ENCODE measurements at regions of chr11 and their contacts with region 1.

Region 1: GRCh38 chr11:1694064-1694845 is 2.7 kb upstream of the KRTAP5-6 start:
- DNase-seq: peak; percentile 63 to 90 (median 82)
- ATAC-seq: peak; percentile 85
- H3K4me3 ChIP-seq: no peak overlapping the region
- H3K4me3 Mint-ChIP-seq: no peak overlapping the region
- H3K27ac ChIP-seq: no peak overlapping the region
- H3K27ac Mint-ChIP-seq: no peak overlapping the region
- H3K4me1 ChIP-seq: peaks cover 16% of the 10 kb centered on the region
- H3K4me1 Mint-ChIP-seq: peaks cover 3% of the 10 kb centered on the region
- H3K27me3 ChIP-seq: peaks cover 0 to 7% of the 10 kb centered on the region in 2 experiments
- H3K27me3 Mint-ChIP-seq: peaks cover 16% of the 10 kb centered on the region
- CTCF ChIP-seq: peak; percentile 64

Region 2: DNA sequence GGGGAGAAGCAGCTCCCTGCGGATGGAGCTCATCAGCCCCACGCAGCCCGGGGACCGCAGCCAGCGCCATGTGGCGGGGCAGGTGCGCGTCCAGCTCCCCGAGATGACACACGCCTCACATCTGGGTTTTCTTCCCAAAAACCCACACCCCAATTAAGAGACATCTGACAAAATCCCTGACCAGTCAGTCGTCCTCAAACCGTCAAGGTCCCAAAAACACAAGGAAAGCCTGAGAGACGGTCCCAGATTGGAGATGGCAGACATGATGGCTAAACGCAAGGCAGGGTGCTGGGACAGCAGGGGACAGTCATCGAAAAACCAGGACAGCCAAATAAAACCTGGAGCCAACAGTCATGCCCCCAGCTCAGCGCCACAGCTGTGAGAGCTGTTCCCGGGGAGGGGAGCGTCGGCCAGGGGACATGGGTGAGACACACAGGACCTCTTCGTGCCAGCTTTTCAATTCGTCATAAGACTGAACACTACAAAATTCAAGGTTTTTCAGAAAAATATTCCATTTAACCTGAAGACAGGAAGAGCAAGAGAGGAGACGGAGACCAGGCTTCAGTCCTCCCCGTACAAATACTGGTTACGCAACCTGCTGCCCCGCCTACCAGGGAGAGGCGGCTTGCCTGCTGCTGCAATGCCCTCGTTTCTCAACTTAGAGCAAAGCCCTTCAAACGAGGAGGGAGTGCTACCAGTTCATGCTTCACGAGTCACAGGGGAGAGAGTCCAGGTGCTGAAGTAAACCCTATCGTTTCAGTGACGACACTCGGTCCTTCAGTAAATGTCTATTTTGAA is 395.4 kb before region 1 on chr11:
- CTCF ChIA-PET with region 1: no interaction called
- POLR2A ChIA-PET with region 1: no interaction called
- intact Hi-C with region 1: no loop called
- DNase-seq: no peak
- ATAC-seq: no peak
- H3K4me3 ChIP-seq: no peak overlapping the region
- H3K4me3 Mint-ChIP-seq: no peak overlapping the region
- H3K27ac ChIP-seq: no peak overlapping the region
- H3K27ac Mint-ChIP-seq: no peak overlapping the region
- H3K4me1 ChIP-seq: no peaks in the 10 kb centered on the region
- H3K4me1 Mint-ChIP-seq: peaks cover 16% of the 10 kb centered on the region
- H3K27me3 ChIP-seq: no peaks in the 10 kb centered on the region
- H3K27me3 Mint-ChIP-seq: no peaks in the 10 kb centered on the region
- CTCF ChIP-seq: no peak

Region 3: GRCh38 chr11:1674173-1675131 is 19.8 kb before region 1 on chr11:
- CTCF ChIA-PET with region 1: interaction called, 39 read pairs
- POLR2A ChIA-PET with region 1: no interaction called
- intact Hi-C with region 1: no loop called
- DNase-seq: no peak
- ATAC-seq: no peak
- H3K4me3 ChIP-seq: no peak overlapping the region
- H3K4me3 Mint-ChIP-seq: no peak overlapping the region
- H3K27ac ChIP-seq: no peak overlapping the region
- H3K27ac Mint-ChIP-seq: no peak overlapping the region
- H3K4me1 ChIP-seq: peaks cover 1% of the 10 kb centered on the region
- H3K4me1 Mint-ChIP-seq: no peaks in the 10 kb centered on the region
- H3K27me3 ChIP-seq: peaks cover 0 to 12% of the 10 kb centered on the region in 2 experiments
- H3K27me3 Mint-ChIP-seq: peaks cover 24% of the 10 kb centered on the region
- CTCF ChIP-seq: no peak

Region 4: DNA sequence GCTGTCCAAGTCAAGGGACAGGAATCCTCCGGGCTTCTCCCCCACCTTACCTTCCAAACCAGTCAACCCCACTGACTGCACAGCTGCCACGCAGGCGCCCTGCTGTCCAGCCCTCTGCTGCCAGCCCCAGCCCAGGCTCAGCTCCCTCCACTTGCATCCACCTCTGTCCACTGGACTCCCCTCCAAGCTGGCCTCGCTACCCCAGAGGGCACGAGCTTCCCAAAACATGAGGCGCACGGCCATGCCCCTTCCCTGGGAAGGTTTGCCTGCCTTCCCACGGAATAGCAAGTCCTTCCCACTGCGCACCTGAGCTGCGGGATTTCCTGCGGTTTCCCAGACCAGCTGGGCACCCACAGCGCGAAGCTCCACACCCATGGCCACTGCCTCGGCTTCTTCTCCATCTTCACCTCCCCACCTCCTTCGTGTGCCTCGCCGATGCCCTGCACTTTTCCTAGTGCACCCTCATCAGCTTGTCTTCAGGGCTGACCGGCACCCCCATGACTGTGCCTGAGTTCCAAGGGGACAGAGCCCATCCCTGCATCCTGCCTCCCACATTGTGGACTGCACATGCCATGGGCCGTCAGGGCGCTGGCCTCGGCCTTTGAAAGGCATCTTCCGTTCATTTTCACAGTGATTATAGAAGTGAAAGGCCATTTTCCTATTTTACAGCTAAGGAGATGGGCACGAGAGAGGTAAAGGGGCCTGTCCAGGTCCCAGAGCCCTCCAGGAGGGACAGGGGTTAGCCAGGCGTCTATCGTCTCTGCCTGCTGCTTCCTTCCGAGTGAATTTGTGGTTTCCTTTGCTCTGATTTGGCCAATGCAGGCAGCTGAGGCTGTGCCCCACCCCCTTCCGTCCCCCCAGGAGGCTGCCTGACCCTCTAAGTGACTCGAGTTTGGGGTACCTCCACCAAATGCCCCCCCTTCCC is 39.7 kb after region 1 on chr11:
- CTCF ChIA-PET with region 1: interaction called, 12 read pairs
- POLR2A ChIA-PET with region 1: no interaction called
- intact Hi-C with region 1: no loop called
- DNase-seq: no peak
- ATAC-seq: no peak
- H3K4me3 ChIP-seq: no peak overlapping the region
- H3K4me3 Mint-ChIP-seq: no peak overlapping the region
- H3K27ac ChIP-seq: no peak overlapping the region
- H3K27ac Mint-ChIP-seq: no peak overlapping the region
- H3K4me1 ChIP-seq: peaks cover 25% of the 10 kb centered on the region
- H3K4me1 Mint-ChIP-seq: peaks cover 33% of the 10 kb centered on the region
- H3K27me3 ChIP-seq: peaks cover 0 to 10% of the 10 kb centered on the region in 2 experiments
- H3K27me3 Mint-ChIP-seq: peaks cover 14% of the 10 kb centered on the region
- CTCF ChIP-seq: no peak

Region 5: GRCh38 chr11:1807264-1807995 is 113.2 kb after region 1 on chr11:
- CTCF ChIA-PET with region 1: interaction called, 42 read pairs
- POLR2A ChIA-PET with region 1: no interaction called
- intact Hi-C with region 1: no loop called
- DNase-seq: peak in 1 of 9 experiments; percentile 28
- ATAC-seq: no peak
- H3K4me3 ChIP-seq: no peak overlapping the region
- H3K4me3 Mint-ChIP-seq: no peak overlapping the region
- H3K27ac ChIP-seq: no peak overlapping the region
- H3K27ac Mint-ChIP-seq: no peak overlapping the region
- H3K4me1 ChIP-seq: no peaks in the 10 kb centered on the region
- H3K4me1 Mint-ChIP-seq: no peaks in the 10 kb centered on the region
- H3K27me3 ChIP-seq: no peaks in the 10 kb centered on the region
- H3K27me3 Mint-ChIP-seq: peaks cover 7% of the 10 kb centered on the region
- CTCF ChIP-seq: no peak

Region 6: GRCh38 chr11:1837171-1838076 is 143.2 kb after region 1 on chr11:
- CTCF ChIA-PET with region 1: interaction called, 513 read pairs
- POLR2A ChIA-PET with region 1: interaction called, 7 read pairs
- intact Hi-C with region 1: loop called in 1 of 2 experiments (anchors 1 kb)
- DNase-seq: peak; percentile 73 to 94 (median 88)
- ATAC-seq: peak; percentile 98
- H3K4me3 ChIP-seq: no peak overlapping the region
- H3K4me3 Mint-ChIP-seq: no peak overlapping the region
- H3K27ac ChIP-seq: no peak overlapping the region
- H3K27ac Mint-ChIP-seq: no peak overlapping the region
- H3K4me1 ChIP-seq: peaks cover 25% of the 10 kb centered on the region
- H3K4me1 Mint-ChIP-seq: peaks cover 10% of the 10 kb centered on the region
- H3K27me3 ChIP-seq: peaks cover 0 to 6% of the 10 kb centered on the region in 2 experiments
- H3K27me3 Mint-ChIP-seq: no peaks in the 10 kb centered on the region
- CTCF ChIP-seq: peak; percentile 84

Region 7: DNA sequence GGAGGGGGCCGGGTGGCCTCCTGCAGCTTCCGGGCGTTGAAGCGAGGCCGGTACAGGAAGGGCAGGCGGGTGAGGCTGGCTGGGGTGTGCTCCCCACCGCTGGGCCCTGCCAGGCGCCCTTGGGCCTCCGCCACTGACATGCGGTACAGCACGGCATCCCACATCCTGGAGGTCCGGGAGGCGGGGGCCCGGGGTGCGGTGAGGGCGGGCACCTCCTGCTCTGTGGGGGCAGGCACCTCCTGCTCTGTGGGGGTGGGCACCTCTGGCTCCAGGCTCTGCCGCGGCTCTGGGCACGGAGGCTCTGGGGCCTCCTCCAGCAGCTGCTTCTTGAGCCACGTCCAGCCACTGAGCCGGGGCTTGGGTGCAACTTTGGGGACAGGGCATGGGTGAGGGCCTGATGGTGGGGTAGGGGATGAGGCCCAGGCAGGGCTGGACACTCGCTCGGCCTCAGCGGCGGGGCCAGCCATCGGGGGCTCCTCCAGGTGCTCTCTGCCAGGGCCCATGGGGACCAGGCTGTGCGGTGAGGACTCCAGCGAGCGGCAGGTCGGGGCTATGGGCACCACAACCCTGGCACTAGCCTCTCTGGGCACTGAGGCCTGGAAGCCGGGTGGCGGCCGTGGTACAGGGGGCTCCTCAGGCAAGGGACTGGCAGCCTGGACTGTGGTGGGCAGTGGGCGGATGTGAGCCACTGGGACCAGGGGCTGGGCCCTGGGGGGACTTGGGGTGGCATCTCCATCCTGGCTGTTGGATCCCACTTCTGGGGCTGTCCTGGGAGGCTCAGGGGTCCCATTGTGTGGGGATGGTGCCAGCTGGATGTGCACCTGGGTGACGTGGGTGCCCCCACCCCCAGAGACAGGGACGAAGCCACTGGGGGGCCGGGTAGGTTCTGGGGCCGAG is 195.2 kb after region 1 on chr11:
- CTCF ChIA-PET with region 1: interaction called, 13 read pairs
- POLR2A ChIA-PET with region 1: no interaction called
- intact Hi-C with region 1: no loop called
- DNase-seq: peak; percentile 63 to 94 (median 83)
- ATAC-seq: peak; percentile 91
- H3K4me3 ChIP-seq: peak overlapping the region; percentile 45 to 64
- H3K4me3 Mint-ChIP-seq: peak overlapping the region; percentile 78
- H3K27ac ChIP-seq: peak overlapping the region; percentile 38 to 70
- H3K27ac Mint-ChIP-seq: peak overlapping the region; percentile 83
- H3K4me1 ChIP-seq: peaks cover 51% of the 10 kb centered on the region
- H3K4me1 Mint-ChIP-seq: peaks cover 52% of the 10 kb centered on the region
- H3K27me3 ChIP-seq: no peaks in the 10 kb centered on the region
- H3K27me3 Mint-ChIP-seq: no peaks in the 10 kb centered on the region
- CTCF ChIP-seq: no peak